ENCODE measurements at regions of chr4 and their contacts with region 1.

Region 1: GRCh38 chr4:176939445-176939844 is 146.7 kb upstream of the VEGFC start:
- DNase-seq: no peak

Region 2: DNA sequence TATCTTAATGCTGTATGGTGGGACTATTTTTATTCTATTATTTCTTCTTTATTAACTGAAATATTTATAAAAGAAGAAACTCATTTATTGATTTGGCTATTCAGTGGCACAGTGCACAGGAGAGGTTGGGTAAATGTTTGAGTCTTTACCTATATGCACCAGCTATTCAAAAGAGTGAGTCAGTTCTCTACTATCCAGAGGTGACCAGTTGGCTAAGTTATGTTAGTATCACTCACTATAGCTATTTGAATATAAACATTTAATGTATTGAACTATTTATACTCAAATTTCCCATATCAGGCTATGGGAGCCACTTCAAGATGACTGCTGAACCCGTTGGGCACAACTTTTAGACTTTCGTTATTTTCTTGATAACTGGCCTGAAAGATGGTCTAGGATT is 40.7 kb before region 1 on chr4:
- CTCF ChIA-PET with region 1: interaction called, 10 read pairs
- POLR2A ChIA-PET with region 1: no interaction called
- DNase-seq: no peak

Region 3: DNA sequence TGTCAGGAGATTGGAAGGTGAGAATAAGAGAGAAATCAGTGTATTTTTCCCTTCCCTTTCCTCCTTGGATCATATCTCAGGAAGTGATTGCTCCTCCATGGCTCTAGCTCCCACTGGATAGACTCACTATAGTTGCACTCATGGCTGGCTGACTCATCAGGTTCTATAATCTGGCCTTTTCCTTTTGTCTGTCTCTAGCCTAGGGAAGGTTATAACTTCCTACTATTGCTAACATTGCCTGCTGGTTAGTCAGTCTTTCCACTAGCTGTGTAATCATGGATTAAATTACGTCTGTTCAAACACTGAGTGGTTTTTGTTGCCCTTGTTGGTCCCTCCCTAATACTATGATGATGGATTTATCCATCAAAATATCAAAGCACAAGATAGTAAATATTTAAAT is 48.8 kb after region 1 on chr4:
- CTCF ChIA-PET with region 1: no interaction called
- POLR2A ChIA-PET with region 1: no interaction called
- DNase-seq: no peak

Measured in HEK293T (cell line).